ENCODE measurements at regions of chr15 and their contacts with region 1.

Region 1: DNA sequence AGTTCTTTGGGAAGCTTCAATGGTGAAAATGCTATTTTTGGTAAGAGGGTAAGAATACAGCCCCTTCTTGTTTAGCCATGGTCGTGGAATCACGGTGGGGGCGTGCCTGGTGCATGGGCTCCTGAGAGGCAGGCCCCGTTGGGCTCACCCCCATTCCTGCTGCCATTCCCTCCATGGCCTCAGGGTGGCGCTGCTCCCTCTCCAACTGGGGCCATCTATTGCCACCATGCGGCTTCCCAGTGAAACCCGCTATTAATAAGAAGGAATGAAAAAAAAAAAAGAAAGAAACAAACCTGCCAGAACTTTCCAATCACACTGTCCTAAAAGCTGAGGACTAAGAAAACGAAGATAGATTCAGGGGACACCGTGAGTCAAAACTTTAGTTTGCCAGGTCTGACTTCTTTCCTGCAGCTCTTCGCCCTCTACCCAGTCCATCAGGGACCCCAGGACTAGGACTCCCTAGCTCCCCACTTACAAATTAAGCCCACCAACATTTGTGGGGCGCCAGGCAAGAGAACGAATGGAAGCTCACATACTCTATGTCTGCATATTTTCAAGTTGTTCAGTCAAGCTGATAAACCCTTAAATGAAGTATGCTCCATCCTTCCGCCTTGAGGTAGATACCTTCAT is 30.6 kb upstream of the ABHD2 start:
- DNase-seq: peak; percentile 82
- ATAC-seq: peak; percentile 89
- H3K4me3 Mint-ChIP-seq: no peak overlapping the region
- H3K27ac Mint-ChIP-seq: no peak overlapping the region
- H3K4me1 Mint-ChIP-seq: peaks cover 4% of the 10 kb centered on the region
- H3K27me3 Mint-ChIP-seq: peaks cover 4% of the 10 kb centered on the region

Region 2: GRCh38 chr15:88725305-88726210 is 332.1 kb before region 1 on chr15:
- CTCF ChIA-PET with region 1: no interaction called
- POLR2A ChIA-PET with region 1: no interaction called
- DNase-seq: no peak
- ATAC-seq: no peak
- H3K4me3 Mint-ChIP-seq: no peak overlapping the region
- H3K27ac Mint-ChIP-seq: no peak overlapping the region
- H3K4me1 Mint-ChIP-seq: no peaks in the 10 kb centered on the region
- H3K27me3 Mint-ChIP-seq: peaks cover 7% of the 10 kb centered on the region

Region 3: DNA sequence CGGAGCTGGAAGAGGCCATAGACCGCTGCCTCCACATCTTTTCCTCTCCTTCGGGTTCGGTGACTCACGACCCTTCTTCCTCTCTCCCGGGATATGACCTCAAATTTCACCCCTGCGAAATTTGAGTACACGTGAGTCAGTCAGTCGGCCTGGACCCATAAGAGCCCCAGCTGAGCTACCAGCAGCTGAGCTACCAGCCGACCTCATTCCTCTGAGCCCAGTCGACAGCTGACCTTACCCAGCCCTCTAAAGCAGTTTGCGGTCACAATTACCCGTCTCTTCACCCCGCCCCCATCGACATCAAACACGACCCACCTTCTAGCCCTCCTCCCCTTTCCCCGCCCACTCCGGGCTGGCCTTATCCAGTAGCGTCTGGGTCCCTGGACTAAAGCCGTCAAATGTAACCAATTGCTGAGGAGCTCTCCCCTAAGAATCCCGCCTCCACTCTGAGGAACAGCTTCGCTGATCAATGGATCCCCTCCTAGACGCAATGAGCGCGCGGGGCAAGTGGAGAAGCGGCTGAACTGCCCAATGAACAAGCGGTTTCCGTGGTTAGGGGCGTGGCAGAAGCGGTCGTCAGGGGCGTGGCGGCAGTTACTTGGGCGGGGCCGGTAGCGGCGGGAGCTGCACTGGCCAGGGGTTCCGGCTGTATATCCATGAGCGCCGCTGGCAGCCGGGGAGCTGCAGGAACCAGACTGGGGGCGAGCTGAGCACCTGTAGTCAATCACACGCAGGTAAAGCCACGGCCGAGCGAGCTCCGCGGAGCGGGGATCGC is 30.4 kb after region 1 on chr15 and contains the start of gene ABHD2:
- CTCF ChIA-PET with region 1: interaction called, 47 read pairs
- POLR2A ChIA-PET with region 1: no interaction called
- DNase-seq: peak; percentile 99
- ATAC-seq: peak; percentile 99
- H3K4me3 Mint-ChIP-seq: no peak within 1 kb of the TSS
- H3K27ac Mint-ChIP-seq: no peak within 1 kb of the TSS
- H3K4me1 Mint-ChIP-seq: peaks cover 31% of the 10 kb centered on the region
- H3K27me3 Mint-ChIP-seq: no peaks in the 10 kb centered on the region
- total RNA-seq, gene ABHD2: 71.3 to 71.9 TPM

Region 4: DNA sequence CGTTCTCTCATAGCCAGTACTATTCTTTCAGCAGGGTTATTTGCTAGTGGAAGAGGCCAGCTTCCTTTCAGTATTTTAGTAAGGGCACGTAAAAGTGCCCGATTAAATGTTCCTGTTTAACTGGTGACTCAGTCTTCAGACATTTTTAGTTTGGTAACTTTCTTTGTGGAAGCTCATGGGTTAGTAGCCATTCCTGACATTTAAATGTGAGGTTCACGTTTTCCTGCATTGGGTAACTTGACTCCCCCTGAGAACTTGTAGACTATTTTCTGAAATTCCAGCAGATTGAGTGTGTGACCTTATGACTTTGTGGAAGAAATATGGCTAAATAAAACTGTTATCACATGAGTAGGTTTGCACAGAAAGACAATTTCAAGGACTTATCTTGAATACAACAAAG is 47.5 kb after region 1 on chr15:
- CTCF ChIA-PET with region 1: interaction called, 13 read pairs
- POLR2A ChIA-PET with region 1: no interaction called
- DNase-seq: no peak
- ATAC-seq: no peak
- H3K4me3 Mint-ChIP-seq: no peak overlapping the region
- H3K27ac Mint-ChIP-seq: no peak overlapping the region
- H3K4me1 Mint-ChIP-seq: peaks cover 8% of the 10 kb centered on the region
- H3K27me3 Mint-ChIP-seq: no peaks in the 10 kb centered on the region

Region 5: GRCh38 chr15:89129123-89129815 is 71.7 kb after region 1 on chr15:
- CTCF ChIA-PET with region 1: interaction called, 88 read pairs
- POLR2A ChIA-PET with region 1: no interaction called
- DNase-seq: peak; percentile 64
- ATAC-seq: no peak
- H3K4me3 Mint-ChIP-seq: no peak overlapping the region
- H3K27ac Mint-ChIP-seq: no peak overlapping the region
- H3K4me1 Mint-ChIP-seq: peaks cover 15% of the 10 kb centered on the region
- H3K27me3 Mint-ChIP-seq: no peaks in the 10 kb centered on the region

Region 6: GRCh38 chr15:89171136-89172072 is 113.8 kb after region 1 on chr15:
- CTCF ChIA-PET with region 1: interaction called, 88 read pairs
- POLR2A ChIA-PET with region 1: no interaction called
- DNase-seq: peak; percentile 47
- ATAC-seq: no peak
- H3K4me3 Mint-ChIP-seq: no peak overlapping the region
- H3K27ac Mint-ChIP-seq: no peak overlapping the region
- H3K4me1 Mint-ChIP-seq: peaks cover 12% of the 10 kb centered on the region
- H3K27me3 Mint-ChIP-seq: no peaks in the 10 kb centered on the region

Region 7: DNA sequence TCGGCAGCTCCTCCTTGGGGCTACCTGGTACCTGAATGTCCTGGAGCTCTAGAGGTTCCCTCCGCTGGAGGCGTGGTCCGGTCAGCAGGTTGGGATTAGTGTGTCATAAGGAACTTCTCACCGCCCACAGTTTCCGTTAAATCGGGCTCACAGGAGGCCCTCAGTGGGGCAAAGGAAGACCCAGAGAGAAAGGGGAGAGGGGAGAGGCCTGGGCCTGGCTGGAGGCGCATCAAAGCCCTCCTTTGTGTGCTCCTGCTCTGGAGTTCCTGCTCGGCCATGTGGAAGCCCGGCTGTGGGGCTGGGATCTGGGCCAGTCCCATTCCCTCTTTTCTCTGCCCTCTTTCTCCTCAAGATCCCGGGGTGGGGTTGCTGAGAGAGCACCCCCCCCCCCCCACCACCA is 163.9 kb after region 1 on chr15 and contains the start of gene RLBP1:
- CTCF ChIA-PET with region 1: no interaction called
- POLR2A ChIA-PET with region 1: no interaction called
- DNase-seq: no peak
- ATAC-seq: no peak
- H3K4me3 Mint-ChIP-seq: no peak within 1 kb of the TSS
- H3K27ac Mint-ChIP-seq: no peak within 1 kb of the TSS
- H3K4me1 Mint-ChIP-seq: no peaks in the 10 kb centered on the region
- H3K27me3 Mint-ChIP-seq: peaks cover 6% of the 10 kb centered on the region
- total RNA-seq, gene RLBP1: not detected

Measured in activated CD8-positive, alpha-beta T cell treated with anti-CD3 and anti-CD28 coated beads, Interleukin-2, amount 10 ng/mL, durations not matched to agents 7 days and 5 days (primary cell).